ENCODE measurements at regions of chr11 and their contacts with region 1.

Region 1: DNA sequence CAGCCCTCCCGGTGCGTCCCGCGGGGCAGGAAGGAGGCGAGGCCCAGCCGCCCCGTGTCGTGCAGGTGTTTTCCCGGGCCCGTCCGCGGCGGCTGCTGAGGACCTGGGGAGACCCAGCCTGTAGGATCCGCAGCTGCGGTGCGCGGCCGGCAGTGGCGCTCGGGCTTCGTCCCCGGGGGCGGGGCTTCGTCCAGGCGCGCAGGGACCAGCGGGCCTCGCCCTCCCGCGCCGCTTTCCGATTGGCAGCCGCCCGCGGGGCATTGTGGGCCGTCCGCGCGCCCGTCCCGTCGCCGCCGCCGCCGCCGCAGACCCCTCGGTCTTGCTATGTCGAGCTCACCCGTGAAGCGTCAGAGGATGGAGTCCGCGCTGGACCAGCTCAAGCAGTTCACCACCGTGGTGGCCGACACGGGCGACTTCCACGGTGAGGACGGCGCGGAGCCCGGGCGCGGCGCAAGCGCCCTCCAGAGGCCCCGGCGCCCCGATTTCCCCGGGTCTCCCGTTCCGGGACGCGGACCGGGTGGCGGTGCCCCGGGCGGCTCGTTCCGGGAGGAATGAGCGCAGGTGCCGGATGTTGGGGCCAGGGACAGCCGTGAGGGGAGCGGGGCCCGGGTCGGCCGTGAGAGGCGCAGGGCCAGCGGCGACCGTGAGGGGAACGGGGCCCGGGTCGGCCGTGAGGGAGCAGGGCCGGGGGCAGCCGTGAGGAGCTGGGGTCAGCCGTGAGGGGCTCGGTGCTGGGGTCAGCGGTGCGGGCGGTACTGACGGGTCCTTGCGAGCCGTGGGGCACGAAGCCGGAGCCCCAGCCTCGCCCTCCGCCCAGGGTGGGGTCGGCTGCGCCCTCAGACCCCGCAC is at the start of gene TALDO1:
- DNase-seq: peak; percentile 88
- H3K4me3 ChIP-seq: peak within 1 kb of the TSS; percentile 41 to 79 (median 71)
- H3K27ac ChIP-seq: peak within 1 kb of the TSS; percentile 48
- H3K4me1 ChIP-seq: peaks cover 17% of the 10 kb centered on the region
- H3K27me3 ChIP-seq: no peaks in the 10 kb centered on the region
- CTCF ChIP-seq: peak in 1 of 2 donors; percentile 7
- POLR2A ChIP-seq: peak; percentile 72
- total RNA-seq, gene TALDO1: 287 and 294 TPM in 2 replicates

Region 2: DNA sequence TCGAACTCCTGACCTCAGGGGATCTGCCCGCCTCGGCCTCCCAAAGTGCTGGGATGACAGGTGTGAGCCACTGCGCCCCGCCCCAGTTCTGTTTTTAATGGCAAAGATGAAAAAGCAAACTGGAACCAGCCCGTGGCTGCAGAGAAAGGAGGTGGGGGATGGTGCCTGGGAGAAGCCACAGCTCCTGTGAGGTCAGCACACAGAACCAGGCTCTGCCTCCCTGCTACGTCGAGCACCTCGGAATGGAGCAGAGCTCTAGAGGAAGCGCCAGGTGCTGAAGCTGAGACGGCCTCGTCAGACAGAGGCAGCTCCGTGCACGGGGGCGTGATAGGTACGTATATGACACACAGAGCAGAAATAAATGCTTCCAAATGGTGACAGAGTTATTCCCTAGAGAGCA is 101.8 kb before region 1 on chr11:
- CTCF ChIA-PET with region 1: no interaction called
- POLR2A ChIA-PET with region 1: no interaction called
- dilution Hi-C with region 1: no loop called
- intact Hi-C with region 1: no loop called
- DNase-seq: no peak
- H3K4me3 ChIP-seq: no peak overlapping the region
- H3K27ac ChIP-seq: no peak overlapping the region
- H3K4me1 ChIP-seq: no peaks in the 10 kb centered on the region
- H3K27me3 ChIP-seq: peaks cover under 1 to 4% of the 10 kb centered on the region in 2 experiments
- CTCF ChIP-seq: no peak
- POLR2A ChIP-seq: no peak

Region 3: DNA sequence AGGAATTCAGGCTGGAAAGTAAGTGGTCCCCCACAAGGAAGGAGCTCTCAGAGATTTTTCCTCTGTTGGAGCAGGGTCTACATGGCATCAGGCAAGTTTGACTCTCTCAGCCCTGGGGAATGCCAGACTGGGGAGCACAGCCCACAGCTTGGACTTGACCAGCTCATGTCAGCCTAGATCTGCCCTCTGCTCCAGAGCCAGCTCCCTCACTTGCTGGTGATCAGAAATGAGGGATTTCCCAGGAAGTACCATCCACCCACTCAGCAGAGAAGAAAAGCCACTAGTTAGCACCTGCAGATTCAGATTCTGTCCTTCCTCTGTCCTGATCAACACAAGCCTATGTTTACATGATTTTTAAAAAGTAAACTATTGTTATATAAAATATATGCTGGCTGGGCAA is 12.9 kb after region 1 on chr11:
- CTCF ChIA-PET with region 1: interaction called, 10 read pairs
- POLR2A ChIA-PET with region 1: no interaction called
- dilution Hi-C with region 1: no loop called
- intact Hi-C with region 1: no loop called
- DNase-seq: no peak
- H3K4me3 ChIP-seq: no peak overlapping the region
- H3K27ac ChIP-seq: no peak overlapping the region
- H3K4me1 ChIP-seq: no peaks in the 10 kb centered on the region
- H3K27me3 ChIP-seq: no peaks in the 10 kb centered on the region
- CTCF ChIP-seq: no peak
- POLR2A ChIP-seq: no peak

Region 4: DNA sequence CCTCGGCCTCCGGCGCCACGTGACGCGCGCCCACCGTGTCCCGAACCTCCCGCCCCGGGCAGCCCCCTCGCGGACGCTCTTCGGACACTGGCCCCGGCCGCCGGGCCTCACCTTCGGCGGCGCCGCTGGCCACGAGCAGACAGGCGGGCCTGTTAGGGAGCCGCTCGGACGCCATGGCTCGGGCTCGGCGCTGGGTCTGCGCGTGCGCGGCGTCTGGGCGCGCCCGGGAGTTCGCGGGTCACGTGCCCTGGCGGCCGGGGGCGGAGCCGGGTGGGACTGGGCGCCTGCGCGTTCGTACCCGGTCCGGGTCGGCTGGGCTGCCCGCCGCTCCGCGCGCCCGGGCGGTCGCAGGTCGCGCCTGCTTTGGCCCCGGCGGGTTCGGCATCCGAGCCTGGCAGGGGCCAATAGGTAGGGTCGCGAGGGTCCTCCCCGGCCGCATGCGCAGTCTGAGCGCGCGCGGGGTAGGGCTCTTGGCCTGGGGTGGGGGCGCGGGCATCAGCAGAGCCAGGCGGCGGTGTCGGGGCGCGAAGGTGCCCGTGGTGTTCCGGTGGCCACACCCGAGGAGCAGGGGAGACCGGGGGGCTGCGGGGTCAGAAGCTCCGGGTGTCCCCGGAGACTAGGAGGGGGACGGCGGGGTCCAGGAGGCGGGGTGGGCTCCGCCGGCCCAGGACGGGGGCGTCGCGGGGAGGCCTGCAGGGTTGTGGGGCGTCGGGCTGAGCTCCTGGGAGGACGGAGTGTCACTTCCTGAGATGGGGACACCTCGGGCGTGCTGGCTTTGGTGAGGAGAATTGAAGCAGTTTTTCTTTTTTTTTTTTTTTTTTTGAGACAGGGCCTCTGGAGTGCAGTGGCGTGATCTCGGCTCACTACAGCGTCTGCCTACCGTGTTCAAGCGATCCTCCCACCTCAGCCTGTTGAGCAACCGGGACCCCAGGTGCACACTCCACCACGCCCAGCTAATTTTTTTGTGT is 30.2 kb after region 1 on chr11 and contains the start of gene GATD1:
- CTCF ChIA-PET with region 1: interaction called, 3 read pairs
- POLR2A ChIA-PET with region 1: interaction called, 5 read pairs
- dilution Hi-C with region 1: no loop called
- intact Hi-C with region 1: loop called (anchors 2 kb)
- DNase-seq: peak; percentile 84
- H3K4me3 ChIP-seq: peak within 1 kb of the TSS; percentile 48 to 97 (median 66)
- H3K27ac ChIP-seq: peak within 1 kb of the TSS; percentile 53
- H3K4me1 ChIP-seq: peaks cover 23% of the 10 kb centered on the region
- H3K27me3 ChIP-seq: no peaks in the 10 kb centered on the region
- CTCF ChIP-seq: no peak
- POLR2A ChIP-seq: peak; percentile 97
- total RNA-seq, gene GATD1: 78.5 and 83.1 TPM in 2 replicates

Measured in endothelial cell of umbilical vein (primary cell).